Activated CD8-positive, alpha-beta T cell treated with anti-CD3 and anti-CD28 coated beads, Interleukin-2, amount 10 ng/mL, durations not matched to agents 7 days and 5 days (primary cell): ENCODE measurements at regions of chr6 and their contacts with region 1.

Region 1: DNA sequence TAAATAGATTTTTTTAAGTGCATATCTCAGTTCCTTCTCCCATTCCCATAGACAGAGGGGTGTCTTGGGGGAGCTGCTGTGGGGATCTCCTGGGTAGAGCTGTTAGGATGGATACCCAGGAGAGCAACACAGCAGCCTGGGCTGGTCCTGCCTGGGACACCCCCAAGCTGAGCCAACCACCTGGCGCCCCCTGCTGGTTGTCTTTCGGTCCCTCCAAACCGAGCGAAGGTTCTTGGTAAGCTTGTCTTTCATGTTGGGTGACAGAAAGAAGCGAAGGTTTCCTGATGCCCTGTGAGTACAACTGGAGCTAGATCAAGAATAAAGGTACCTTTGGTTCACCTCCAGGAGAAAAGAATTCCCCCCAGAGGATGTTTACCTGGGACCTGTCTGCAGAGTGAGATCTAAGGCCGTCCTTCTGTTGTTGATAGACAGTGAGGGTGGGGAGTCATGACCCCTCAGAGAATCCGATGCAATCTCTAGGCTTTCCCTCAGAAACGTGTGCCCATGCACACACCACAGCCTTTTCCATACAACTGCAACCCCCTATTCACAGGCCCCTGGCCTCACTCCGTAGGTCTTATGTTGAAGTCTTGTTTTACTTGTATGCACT is 50.8 kb downstream of the SNX9 start:
- DNase-seq: peak; percentile 91
- ATAC-seq: peak; percentile 89
- H3K4me3 Mint-ChIP-seq: no peak overlapping the region
- H3K27ac Mint-ChIP-seq: no peak overlapping the region
- H3K4me1 Mint-ChIP-seq: peaks cover 15% of the 10 kb centered on the region
- H3K27me3 Mint-ChIP-seq: no peaks in the 10 kb centered on the region

Region 2: GRCh38 chr6:157314705-157315321 is 559.0 kb before region 1 on chr6:
- CTCF ChIA-PET with region 1: interaction called, 10 read pairs
- POLR2A ChIA-PET with region 1: no interaction called
- DNase-seq: peak; percentile 59
- ATAC-seq: peak; percentile 91
- H3K4me3 Mint-ChIP-seq: no peak overlapping the region
- H3K27ac Mint-ChIP-seq: no peak overlapping the region
- H3K4me1 Mint-ChIP-seq: peaks cover 5% of the 10 kb centered on the region
- H3K27me3 Mint-ChIP-seq: no peaks in the 10 kb centered on the region

Region 3: GRCh38 chr6:157764178-157765033 is 109.4 kb before region 1 on chr6:
- CTCF ChIA-PET with region 1: interaction called, 79 read pairs
- POLR2A ChIA-PET with region 1: no interaction called
- DNase-seq: peak; percentile 80
- ATAC-seq: peak; percentile 68
- H3K4me3 Mint-ChIP-seq: peak overlapping the region; percentile 46
- H3K27ac Mint-ChIP-seq: peak overlapping the region; percentile 91
- H3K4me1 Mint-ChIP-seq: peaks cover 72% of the 10 kb centered on the region
- H3K27me3 Mint-ChIP-seq: peaks cover 4% of the 10 kb centered on the region

Region 4: DNA sequence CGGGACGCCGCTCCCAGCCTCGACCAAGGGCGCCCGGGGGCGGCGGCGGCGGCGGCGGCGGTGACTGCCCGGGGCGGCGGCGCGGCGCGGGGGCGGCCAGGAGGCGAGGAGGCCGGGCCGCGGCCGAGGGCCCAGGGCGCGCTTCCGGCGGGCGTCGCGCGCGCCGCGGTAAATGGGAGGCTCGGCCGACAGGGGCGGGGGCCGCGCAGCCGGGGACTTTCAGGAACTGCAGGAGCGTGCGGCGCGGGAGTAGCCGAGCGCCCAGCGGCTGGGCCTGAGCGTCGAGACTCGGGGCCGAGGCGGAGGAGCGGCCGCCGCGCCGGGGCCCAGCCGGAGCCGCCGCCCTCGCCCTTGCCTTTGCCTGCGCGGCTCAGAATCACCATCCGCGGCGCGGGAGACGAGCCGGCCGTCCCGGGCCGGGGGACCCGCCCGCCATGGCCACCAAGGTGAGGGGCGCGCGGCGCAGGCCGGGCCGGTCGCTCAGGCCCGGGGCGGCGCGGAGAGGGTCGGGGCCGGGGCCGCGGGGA is 50.8 kb before region 1 on chr6 and contains the start of gene SNX9:
- CTCF ChIA-PET with region 1: interaction called, 10 read pairs
- POLR2A ChIA-PET with region 1: no interaction called
- DNase-seq: peak; percentile 66
- ATAC-seq: peak; percentile 79
- H3K4me3 Mint-ChIP-seq: peak within 1 kb of the TSS; percentile 79
- H3K27ac Mint-ChIP-seq: peak within 1 kb of the TSS; percentile 81
- H3K4me1 Mint-ChIP-seq: peaks cover 24% of the 10 kb centered on the region
- H3K27me3 Mint-ChIP-seq: peaks cover 31% of the 10 kb centered on the region
- total RNA-seq, gene SNX9: 9.1 to 9.2 TPM

Region 5: DNA sequence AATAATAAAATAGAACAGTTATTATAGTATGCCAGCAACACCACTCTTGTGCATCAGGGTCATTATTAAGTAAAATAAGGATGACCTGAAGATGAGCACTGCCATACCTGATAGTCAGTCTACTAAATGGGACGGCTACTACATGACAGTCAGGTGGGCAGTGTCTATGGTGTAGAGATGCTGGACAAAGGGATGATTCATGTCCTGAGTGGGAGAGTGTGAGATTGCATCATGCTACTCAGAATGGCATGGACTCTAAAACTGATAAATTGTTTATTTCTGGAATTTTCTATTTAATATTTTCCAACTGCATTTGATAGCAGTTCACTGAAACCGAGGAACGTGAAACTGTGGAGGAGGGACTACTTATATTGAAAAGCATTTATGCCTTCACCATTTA is 12.0 kb before region 1 on chr6:
- CTCF ChIA-PET with region 1: interaction called, 22 read pairs
- POLR2A ChIA-PET with region 1: no interaction called
- DNase-seq: no peak
- ATAC-seq: no peak
- H3K4me3 Mint-ChIP-seq: no peak overlapping the region
- H3K27ac Mint-ChIP-seq: no peak overlapping the region
- H3K4me1 Mint-ChIP-seq: peaks cover 27% of the 10 kb centered on the region
- H3K27me3 Mint-ChIP-seq: peaks cover 33% of the 10 kb centered on the region

Region 6: DNA sequence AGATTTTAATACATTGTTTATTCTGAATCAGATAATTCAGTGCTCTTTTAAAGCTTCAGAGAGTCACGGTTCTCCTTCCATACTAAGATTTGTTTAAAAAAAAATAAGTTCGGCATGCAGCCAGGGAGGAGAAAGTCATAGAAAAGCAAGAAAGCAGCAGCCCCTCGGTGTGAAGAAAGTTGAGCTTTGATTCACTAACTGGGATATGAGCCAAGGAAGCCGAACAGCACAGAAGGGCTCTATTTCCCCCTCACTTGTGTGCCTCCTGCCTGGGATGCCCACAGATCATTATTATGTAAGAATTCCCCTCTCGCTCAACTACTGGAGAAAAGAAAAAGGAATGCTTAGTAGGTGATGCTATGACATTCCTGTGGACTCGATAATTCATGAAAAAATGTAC is 38.5 kb after region 1 on chr6:
- CTCF ChIA-PET with region 1: interaction called, 10 read pairs
- POLR2A ChIA-PET with region 1: no interaction called
- DNase-seq: no peak
- ATAC-seq: no peak
- H3K4me3 Mint-ChIP-seq: no peak overlapping the region
- H3K27ac Mint-ChIP-seq: no peak overlapping the region
- H3K4me1 Mint-ChIP-seq: peaks cover 13% of the 10 kb centered on the region
- H3K27me3 Mint-ChIP-seq: no peaks in the 10 kb centered on the region